IMR-90 (cell line): ENCODE measurements at regions of chr2 and their contacts with region 1.

Region 1: GRCh38 chr2:196171248-196171871 is at the start of gene STK17B:
- DNase-seq: peak; percentile 91
- ATAC-seq: peak; percentile 91
- H3K4me3 ChIP-seq: peak within 1 kb of the TSS; percentile 67
- H3K27ac ChIP-seq: peak within 1 kb of the TSS; percentile 67
- H3K4me1 ChIP-seq: peaks cover 2% of the 10 kb centered on the region
- H3K27me3 ChIP-seq: no peaks in the 10 kb centered on the region
- CTCF ChIP-seq: no peak
- POLR2A ChIP-seq: peak; percentile 97
- RAD21 ChIP-seq: peak; percentile 15; the same call in 1 of the 2 replicates
- total RNA-seq, gene STK17B: 48.9 and 50.3 TPM in 2 replicates

Region 2: GRCh38 chr2:196233021-196233804 is 61.9 kb after region 1 on chr2:
- CTCF ChIA-PET with region 1: no interaction called
- POLR2A ChIA-PET with region 1: interaction called, 5 read pairs
- dilution Hi-C with region 1: no loop called
- in situ Hi-C with region 1: no loop called
- intact Hi-C with region 1: loop called (anchors 5 kb)
- DNase-seq: peak; percentile 85
- ATAC-seq: peak; percentile 79
- H3K4me3 ChIP-seq: no peak overlapping the region
- H3K27ac ChIP-seq: 0 out of 2 replicates have a peak overlapping the region, but pooled peaks have one; percentile 28
- H3K4me1 ChIP-seq: peaks cover 5% of the 10 kb centered on the region; the same call in 1 of the 2 replicates
- H3K27me3 ChIP-seq: no peaks in the 10 kb centered on the region
- CTCF ChIP-seq: no peak
- POLR2A ChIP-seq: no peak
- RAD21 ChIP-seq: no peak

Region 3: GRCh38 chr2:196263181-196263747 is 91.9 kb after region 1 on chr2:
- CTCF ChIA-PET with region 1: no interaction called
- POLR2A ChIA-PET with region 1: no interaction called
- dilution Hi-C with region 1: no loop called
- in situ Hi-C with region 1: loop called (anchors 25 kb)
- intact Hi-C with region 1: loop called (anchors 2 kb)
- DNase-seq: peak; percentile 64
- ATAC-seq: no peak
- H3K4me3 ChIP-seq: no peak overlapping the region
- H3K27ac ChIP-seq: no peak overlapping the region
- H3K4me1 ChIP-seq: peaks cover 5% of the 10 kb centered on the region; the same call in 1 of the 2 replicates
- H3K27me3 ChIP-seq: no peaks in the 10 kb centered on the region
- CTCF ChIP-seq: no peak
- POLR2A ChIP-seq: no peak
- RAD21 ChIP-seq: no peak

Region 4: GRCh38 chr2:196268538-196269338 is 97.4 kb after region 1 on chr2:
- CTCF ChIA-PET with region 1: no interaction called
- POLR2A ChIA-PET with region 1: no interaction called
- dilution Hi-C with region 1: no loop called
- in situ Hi-C with region 1: loop called (anchors 25 kb)
- intact Hi-C with region 1: loop called (anchors 2 kb)
- DNase-seq: peak; percentile 74
- ATAC-seq: peak; percentile 77
- H3K4me3 ChIP-seq: no peak overlapping the region
- H3K27ac ChIP-seq: peak overlapping the region; percentile 57
- H3K4me1 ChIP-seq: peaks cover 3% of the 10 kb centered on the region
- H3K27me3 ChIP-seq: no peaks in the 10 kb centered on the region
- CTCF ChIP-seq: no peak
- POLR2A ChIP-seq: no peak
- RAD21 ChIP-seq: no peak

Region 5: DNA sequence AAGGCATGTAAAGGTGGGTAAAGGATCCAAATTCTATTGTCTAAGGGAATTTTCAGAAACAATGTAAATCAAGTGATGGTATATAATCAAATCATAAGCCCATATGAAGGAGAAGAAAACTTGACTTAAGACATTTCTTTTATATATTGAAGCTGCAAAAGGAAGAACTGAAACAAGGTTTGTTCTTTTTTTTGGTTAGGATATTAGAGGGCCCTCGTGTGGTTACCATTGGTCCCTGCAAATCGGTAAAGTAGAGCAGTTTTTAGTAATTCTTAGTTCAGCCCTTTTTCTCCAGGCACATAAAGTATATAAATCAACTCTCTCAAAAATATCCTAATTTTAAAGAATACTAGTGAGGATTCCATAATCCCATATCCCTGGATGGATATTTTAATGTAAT is 105.6 kb after region 1 on chr2:
- CTCF ChIA-PET with region 1: interaction called, 4 read pairs
- POLR2A ChIA-PET with region 1: interaction called, 3 read pairs
- dilution Hi-C with region 1: no loop called
- in situ Hi-C with region 1: loop called (anchors 25 kb)
- intact Hi-C with region 1: loop called (anchors 1 kb)
- DNase-seq: peak; percentile 64
- ATAC-seq: no peak
- H3K4me3 ChIP-seq: no peak overlapping the region
- H3K27ac ChIP-seq: no peak overlapping the region
- H3K4me1 ChIP-seq: peaks cover 21% of the 10 kb centered on the region
- H3K27me3 ChIP-seq: no peaks in the 10 kb centered on the region
- CTCF ChIP-seq: peak; percentile 69
- POLR2A ChIP-seq: no peak
- RAD21 ChIP-seq: peak; percentile 68

Region 6: GRCh38 chr2:196291873-196292800 is 120.8 kb after region 1 on chr2:
- CTCF ChIA-PET with region 1: no interaction called
- POLR2A ChIA-PET with region 1: no interaction called
- dilution Hi-C with region 1: no loop called
- in situ Hi-C with region 1: no loop called
- intact Hi-C with region 1: loop called (anchors 5 kb)
- DNase-seq: no peak
- ATAC-seq: no peak
- H3K4me3 ChIP-seq: no peak overlapping the region
- H3K27ac ChIP-seq: no peak overlapping the region
- H3K4me1 ChIP-seq: peaks cover 11% of the 10 kb centered on the region
- H3K27me3 ChIP-seq: no peaks in the 10 kb centered on the region
- CTCF ChIP-seq: no peak
- POLR2A ChIP-seq: no peak
- RAD21 ChIP-seq: no peak